Mammary epithelial cell (primary cell): ENCODE measurements at regions of chr7 and their contacts with region 1.

Region 1: DNA sequence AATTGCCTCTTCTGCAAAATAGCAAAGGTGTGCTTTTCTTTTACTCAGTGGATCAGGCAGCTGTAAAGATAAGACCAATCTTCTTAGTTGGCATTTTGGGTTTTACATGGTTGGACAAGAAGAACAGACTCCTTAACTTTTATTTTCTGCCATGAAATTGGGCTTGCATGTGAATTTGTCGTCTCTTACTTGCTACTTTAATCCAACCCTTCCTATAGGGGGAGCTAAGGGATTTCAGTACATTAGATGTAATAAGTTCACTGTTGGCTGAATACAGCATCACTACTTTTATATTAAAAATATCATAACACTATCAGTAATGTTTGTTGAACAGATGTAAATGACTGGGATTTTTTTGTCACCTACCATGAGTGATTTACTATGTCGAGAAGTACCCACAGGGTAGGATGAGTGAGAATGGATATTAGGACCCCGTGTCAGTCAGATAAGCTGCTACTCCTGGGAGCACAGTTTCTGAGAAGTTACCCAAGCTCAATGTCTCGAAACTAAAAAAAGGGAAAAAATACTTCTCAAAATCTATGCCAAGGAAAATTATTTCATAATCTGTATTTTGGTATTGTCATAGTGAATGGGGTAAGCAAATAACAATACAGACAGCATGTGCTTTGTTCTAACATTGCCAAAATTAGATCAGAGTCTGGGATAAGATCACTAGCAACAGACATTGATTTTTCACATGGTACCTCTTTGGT is 127.4 kb upstream of the AGR3 start:
- DNase-seq: no peak
- H3K4me3 ChIP-seq: no peak overlapping the region
- H3K27ac ChIP-seq: no peak overlapping the region
- H3K4me1 ChIP-seq: peaks cover 17% of the 10 kb centered on the region
- H3K27me3 ChIP-seq: no peaks in the 10 kb centered on the region
- CTCF ChIP-seq: peak; percentile 44 to 60

Region 2: DNA sequence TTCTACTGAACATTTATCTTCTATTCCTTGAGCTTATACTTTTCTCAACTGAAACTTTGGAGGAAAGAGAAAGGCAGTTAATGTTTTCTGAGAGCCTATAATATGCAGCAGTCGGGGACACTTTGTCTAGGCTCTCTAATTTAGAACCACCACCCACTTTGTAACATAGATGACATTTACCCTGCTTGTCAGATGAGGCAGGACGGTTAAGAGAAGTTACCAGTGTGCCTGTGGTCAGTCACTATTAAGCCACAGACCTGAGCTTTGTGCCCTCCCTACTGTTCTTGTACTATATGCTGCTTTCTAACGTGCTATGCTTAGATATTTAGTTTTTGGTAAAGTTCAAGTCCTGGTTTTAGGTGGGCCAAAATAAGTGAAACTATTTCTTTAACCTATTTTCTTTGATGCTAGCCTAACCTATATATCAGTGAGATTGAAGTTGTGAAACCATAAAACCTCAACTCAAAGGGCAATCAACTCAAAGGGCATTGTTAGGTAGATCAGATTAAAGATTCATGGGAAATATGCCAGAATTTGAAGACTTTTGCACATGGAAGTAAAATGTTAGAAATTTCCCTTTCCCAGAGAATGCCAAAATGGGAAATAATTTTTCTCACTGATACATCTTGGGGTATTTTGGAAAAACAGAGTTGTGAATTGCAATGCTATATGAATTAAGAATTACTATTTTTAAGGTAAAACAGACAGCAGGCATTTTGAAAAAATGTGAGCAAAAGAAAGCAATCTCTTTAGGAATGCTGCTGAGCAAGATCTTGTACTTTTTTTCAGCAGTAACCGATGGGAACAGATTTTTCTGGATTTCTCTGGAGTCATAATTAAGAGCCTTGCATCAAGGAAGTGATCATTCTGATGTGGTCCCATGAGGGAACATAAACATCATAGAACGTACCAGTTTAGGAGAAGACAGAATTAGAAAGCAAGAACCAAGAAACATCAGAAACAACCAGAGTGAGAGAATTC is 29.3 kb after region 1 on chr7:
- CTCF ChIA-PET with region 1: no interaction called
- dilution Hi-C with region 1: no loop called
- in situ Hi-C with region 1: no loop called
- intact Hi-C with region 1: loop called (anchors 1 kb)
- DNase-seq: no peak
- H3K4me3 ChIP-seq: no peak overlapping the region
- H3K27ac ChIP-seq: no peak overlapping the region
- H3K4me1 ChIP-seq: peaks cover 25% of the 10 kb centered on the region
- H3K27me3 ChIP-seq: no peaks in the 10 kb centered on the region
- CTCF ChIP-seq: no peak

Region 3: GRCh38 chr7:17063045-17063383 is 53.9 kb after region 1 on chr7:
- CTCF ChIA-PET with region 1: no interaction called
- dilution Hi-C with region 1: no loop called
- in situ Hi-C with region 1: no loop called
- intact Hi-C with region 1: loop called (anchors 5 kb)
- DNase-seq: no peak
- H3K4me3 ChIP-seq: no peak overlapping the region
- H3K27ac ChIP-seq: no peak overlapping the region
- H3K4me1 ChIP-seq: peaks cover 1% of the 10 kb centered on the region
- H3K27me3 ChIP-seq: no peaks in the 10 kb centered on the region
- CTCF ChIP-seq: peak; percentile 37 to 46

Region 4: GRCh38 chr7:17247357-17247756 is 238.2 kb after region 1 on chr7:
- CTCF ChIA-PET with region 1: interaction called, 20 read pairs
- dilution Hi-C with region 1: no loop called
- in situ Hi-C with region 1: no loop called
- intact Hi-C with region 1: no loop called
- DNase-seq: no peak
- H3K4me3 ChIP-seq: no peak overlapping the region
- H3K27ac ChIP-seq: no peak overlapping the region
- H3K4me1 ChIP-seq: peaks cover 3% of the 10 kb centered on the region
- H3K27me3 ChIP-seq: no peaks in the 10 kb centered on the region
- CTCF ChIP-seq: no peak